Activated naive CD4-positive, alpha-beta T cell treated with anti-CD3 and anti-CD28 coated beads, Interleukin-2, amount 10 ng/mL, durations not matched to agents 7 days and 5 days (primary cell): ENCODE measurements at regions of chr4 and their contacts with region 1.

Region 1: GRCh38 chr4:173025131-173025530 is 143.5 kb upstream of the GALNT7 start:
- DNase-seq: peak; percentile 28
- H3K4me3 Mint-ChIP-seq: no peak overlapping the region
- H3K27ac Mint-ChIP-seq: no peak overlapping the region
- H3K4me1 Mint-ChIP-seq: no peaks in the 10 kb centered on the region
- H3K27me3 Mint-ChIP-seq: peaks cover 7% of the 10 kb centered on the region

Region 2: GRCh38 chr4:173257732-173258717 is 232.9 kb after region 1 on chr4:
- CTCF ChIA-PET with region 1: interaction called, 44 read pairs
- DNase-seq: peak; percentile 69
- H3K4me3 Mint-ChIP-seq: no peak overlapping the region
- H3K27ac Mint-ChIP-seq: no peak overlapping the region
- H3K4me1 Mint-ChIP-seq: no peaks in the 10 kb centered on the region
- H3K27me3 Mint-ChIP-seq: no peaks in the 10 kb centered on the region

Region 3: GRCh38 chr4:173591760-173592159 is 566.6 kb after region 1 on chr4:
- CTCF ChIA-PET with region 1: no interaction called
- DNase-seq: no peak
- H3K4me3 Mint-ChIP-seq: no peak overlapping the region
- H3K27ac Mint-ChIP-seq: no peak overlapping the region
- H3K4me1 Mint-ChIP-seq: no peaks in the 10 kb centered on the region
- H3K27me3 Mint-ChIP-seq: no peaks in the 10 kb centered on the region